ENCODE measurements at regions of chr2 and their contacts with region 1.

Region 1: DNA sequence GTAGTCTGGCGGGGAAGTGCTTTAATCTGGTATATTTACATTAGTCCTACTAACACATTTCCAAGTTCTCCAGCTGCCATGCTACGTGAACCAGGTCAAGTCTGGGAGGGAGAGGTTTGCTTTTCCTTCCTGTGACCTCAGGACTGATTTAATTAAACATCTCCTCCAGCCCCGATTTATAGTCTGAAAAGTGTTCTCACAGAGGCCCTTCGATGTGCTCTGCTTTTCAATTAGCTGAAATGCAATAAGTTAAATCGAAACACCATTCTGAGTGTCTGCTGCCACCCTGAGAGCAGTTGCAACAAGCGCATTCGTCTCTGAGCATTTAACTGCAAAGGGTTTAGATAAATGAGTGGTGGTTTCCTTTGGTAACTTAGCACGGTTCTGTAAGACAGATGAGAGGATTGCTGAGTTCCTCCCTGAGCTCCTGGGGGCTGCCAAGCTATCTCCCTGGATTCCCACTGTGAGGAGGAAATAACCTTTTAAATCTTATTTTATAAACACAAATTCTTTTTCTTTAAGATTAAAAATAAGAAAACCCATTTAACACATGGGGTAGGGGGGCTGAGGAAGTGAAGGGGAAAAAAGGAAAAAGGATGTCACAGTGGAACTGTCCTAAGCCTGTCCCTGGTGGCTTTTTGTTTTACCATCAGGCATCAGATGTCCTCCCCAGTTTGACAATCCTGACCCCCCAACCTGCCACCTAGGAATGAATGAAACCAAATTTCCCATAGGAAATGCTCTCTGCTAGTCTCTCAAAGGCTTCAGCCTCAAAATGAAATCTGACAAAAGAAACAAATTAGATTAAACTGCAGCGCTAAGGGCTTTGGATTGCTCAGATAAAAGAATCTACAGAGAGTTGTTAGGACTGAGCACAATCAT is 56.5 kb upstream of the CREB1 start:
- DNase-seq: peak; percentile 63
- H3K4me3 Mint-ChIP-seq: no peak overlapping the region
- H3K27ac Mint-ChIP-seq: no peak overlapping the region
- H3K4me1 Mint-ChIP-seq: peaks cover 22% of the 10 kb centered on the region
- H3K27me3 Mint-ChIP-seq: peaks cover 3% of the 10 kb centered on the region

Region 2: DNA sequence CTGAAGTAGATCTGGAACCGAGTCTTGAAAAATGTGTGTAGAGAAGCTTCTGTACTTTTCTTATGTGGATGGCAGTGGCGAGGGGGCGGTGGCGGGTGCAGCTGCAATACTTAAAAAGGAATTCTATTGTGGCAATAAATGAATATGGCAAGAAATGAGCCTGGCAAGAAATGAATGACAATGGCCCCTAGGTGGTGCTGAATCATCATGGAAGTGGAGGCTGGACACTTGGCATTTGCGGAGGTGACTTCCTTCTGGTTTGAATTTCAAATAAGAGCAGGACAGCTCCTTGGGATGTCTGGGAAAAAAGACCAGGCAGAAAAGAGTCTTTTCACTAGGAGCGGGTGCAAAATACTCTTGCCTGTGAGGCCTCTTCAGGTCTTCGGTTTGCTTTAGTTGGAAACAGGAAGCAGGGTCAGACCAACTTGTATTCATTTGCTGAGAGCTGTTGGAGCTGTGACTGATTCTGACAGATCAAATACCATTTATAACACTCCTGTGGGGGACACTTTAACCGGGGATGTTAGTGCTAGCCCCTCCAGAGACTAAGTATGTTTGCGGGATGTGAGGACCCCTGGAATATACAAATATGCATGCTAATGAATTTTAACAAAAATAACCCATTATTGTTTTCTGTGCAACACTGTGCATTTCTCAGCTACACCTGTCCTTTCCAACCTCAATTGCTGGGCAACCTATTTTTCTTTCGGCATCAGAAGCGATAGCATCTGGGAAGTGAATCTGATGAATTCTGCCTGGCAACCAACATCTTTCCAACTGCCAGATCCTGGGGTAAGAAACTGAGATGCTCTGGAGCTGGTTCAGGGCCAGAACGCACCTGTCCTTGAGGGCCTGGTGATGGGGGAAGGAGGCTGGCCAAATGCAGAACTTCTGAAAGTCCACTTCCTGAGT is 672.5 kb before region 1 on chr2:
- CTCF ChIA-PET with region 1: interaction called, 39 read pairs
- POLR2A ChIA-PET with region 1: interaction called, 7 read pairs
- DNase-seq: peak; percentile 60
- H3K4me3 Mint-ChIP-seq: peak overlapping the region; percentile 51
- H3K27ac Mint-ChIP-seq: peak overlapping the region; percentile 46
- H3K4me1 Mint-ChIP-seq: peaks cover 18% of the 10 kb centered on the region
- H3K27me3 Mint-ChIP-seq: no peaks in the 10 kb centered on the region

Region 3: GRCh38 chr2:207046724-207047123 is 426.6 kb before region 1 on chr2:
- CTCF ChIA-PET with region 1: interaction called, 17 read pairs
- POLR2A ChIA-PET with region 1: interaction called, 3 read pairs
- DNase-seq: peak; percentile 34
- H3K4me3 Mint-ChIP-seq: no peak overlapping the region
- H3K27ac Mint-ChIP-seq: no peak overlapping the region
- H3K4me1 Mint-ChIP-seq: peaks cover 13% of the 10 kb centered on the region
- H3K27me3 Mint-ChIP-seq: peaks cover 2% of the 10 kb centered on the region